ENCODE measurements at regions of chr5 and their contacts with region 1.

Region 1: GRCh38 chr5:115831163-115831768 is 10.1 kb downstream of the ATG12 start:
- DNase-seq: peak; percentile 49
- ATAC-seq: peak; percentile 66
- H3K4me3 ChIP-seq: no peak overlapping the region
- H3K27ac ChIP-seq: no peak overlapping the region
- H3K4me1 ChIP-seq: no peaks in the 10 kb centered on the region
- H3K27me3 ChIP-seq: no peaks in the 10 kb centered on the region
- CTCF ChIP-seq: peak; percentile 67
- POLR2A ChIP-seq: no peak
- RAD21 ChIP-seq: peak; percentile 55

Region 2: DNA sequence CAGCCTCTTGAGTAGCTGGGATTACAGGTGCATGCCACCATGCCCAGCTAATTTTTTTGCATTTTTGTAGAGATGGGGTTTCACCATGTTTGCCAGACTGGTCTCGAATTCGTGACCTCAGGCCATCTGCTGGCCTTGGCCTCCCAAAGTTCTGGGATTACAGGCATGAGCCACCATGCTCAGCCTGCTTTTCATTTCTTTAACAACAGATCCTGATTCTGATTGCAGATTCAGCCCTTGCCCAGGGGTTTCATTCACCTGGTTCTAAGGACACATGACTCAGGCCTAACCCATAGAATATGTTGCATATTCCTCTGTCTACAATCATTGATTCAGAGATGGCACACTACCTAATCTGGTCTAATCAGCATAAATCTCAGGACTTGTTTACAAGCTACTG is 478.7 kb before region 1 on chr5:
- CTCF ChIA-PET with region 1: no interaction called
- POLR2A ChIA-PET with region 1: interaction called, 28 read pairs
- dilution Hi-C with region 1: no loop called
- in situ Hi-C with region 1: no loop called
- intact Hi-C with region 1: no loop called
- DNase-seq: no peak
- ATAC-seq: no peak
- H3K4me3 ChIP-seq: no peak overlapping the region
- H3K27ac ChIP-seq: no peak overlapping the region
- H3K4me1 ChIP-seq: peaks cover 5% of the 10 kb centered on the region
- H3K27me3 ChIP-seq: no peaks in the 10 kb centered on the region
- CTCF ChIP-seq: no peak
- POLR2A ChIP-seq: no peak
- RAD21 ChIP-seq: no peak

Measured in IMR-90 (cell line).